ENCODE measurements at regions of chr15 and their contacts with region 1.

Region 1: GRCh38 chr15:78241007-78241406 is 6.6 kb upstream of the ACSBG1 start:
- DNase-seq: peak; percentile 90
- ATAC-seq: peak; percentile 95
- H3K4me3 Mint-ChIP-seq: no peak overlapping the region
- H3K27ac Mint-ChIP-seq: no peak overlapping the region
- H3K4me1 Mint-ChIP-seq: peaks cover 3% of the 10 kb centered on the region
- H3K27me3 Mint-ChIP-seq: peaks cover 16% of the 10 kb centered on the region

Region 2: GRCh38 chr15:78120523-78120922 is 120.5 kb before region 1 on chr15:
- CTCF ChIA-PET with region 1: interaction called, 101 read pairs
- DNase-seq: no peak
- ATAC-seq: no peak
- H3K4me3 Mint-ChIP-seq: no peak overlapping the region
- H3K27ac Mint-ChIP-seq: no peak overlapping the region
- H3K4me1 Mint-ChIP-seq: peaks cover 3% of the 10 kb centered on the region
- H3K27me3 Mint-ChIP-seq: peaks cover 4% of the 10 kb centered on the region

Region 3: GRCh38 chr15:78140292-78140691 is 100.7 kb before region 1 on chr15:
- CTCF ChIA-PET with region 1: interaction called, 13 read pairs
- DNase-seq: no peak
- ATAC-seq: no peak
- H3K4me3 Mint-ChIP-seq: no peak overlapping the region
- H3K27ac Mint-ChIP-seq: no peak overlapping the region
- H3K4me1 Mint-ChIP-seq: no peaks in the 10 kb centered on the region
- H3K27me3 Mint-ChIP-seq: no peaks in the 10 kb centered on the region

Region 4: DNA sequence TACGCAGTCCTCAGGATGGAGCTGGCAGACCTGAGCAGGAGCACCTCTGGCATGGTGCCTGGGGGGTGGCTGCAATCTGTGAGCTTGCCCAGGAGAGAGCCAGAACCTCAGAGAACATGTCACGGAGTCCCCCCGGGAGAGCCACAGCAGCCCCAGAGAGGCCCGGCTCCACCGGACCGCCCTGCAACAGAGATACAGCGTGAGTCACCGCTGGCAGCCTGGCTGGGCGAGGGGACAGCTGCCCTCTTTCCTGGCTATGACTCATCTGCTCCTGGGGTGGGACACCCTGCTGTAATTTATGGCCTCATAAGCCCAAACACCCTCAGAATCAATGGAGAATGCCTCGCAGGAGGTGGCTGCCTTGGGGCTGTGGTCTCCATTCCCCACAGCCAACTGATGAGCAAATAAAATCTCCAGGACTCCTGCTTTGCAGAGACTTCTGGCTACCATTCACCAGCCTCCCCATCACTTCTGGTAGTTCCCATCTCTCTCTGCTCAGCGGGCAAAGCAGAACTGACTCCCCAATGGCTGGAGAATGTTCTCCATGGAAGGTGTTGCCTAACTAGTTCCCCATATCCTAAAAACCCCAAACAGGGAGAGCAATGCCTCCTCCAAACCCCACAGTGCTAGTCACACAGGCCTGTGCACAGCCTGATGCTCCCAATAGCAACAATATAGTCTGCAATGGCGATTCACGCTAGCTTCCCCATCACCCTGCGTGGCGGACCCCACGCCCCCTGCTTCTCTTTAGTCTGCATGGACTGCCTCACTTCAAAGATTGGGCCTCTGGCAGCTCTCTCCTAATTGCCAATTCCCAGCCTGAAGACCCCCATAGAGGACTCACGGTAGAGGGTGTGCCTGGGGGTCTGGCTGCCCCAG is 28.2 kb before region 1 on chr15:
- CTCF ChIA-PET with region 1: interaction called, 12 read pairs
- DNase-seq: no peak
- ATAC-seq: no peak
- H3K4me3 Mint-ChIP-seq: no peak overlapping the region
- H3K27ac Mint-ChIP-seq: no peak overlapping the region
- H3K4me1 Mint-ChIP-seq: peaks cover 1% of the 10 kb centered on the region
- H3K27me3 Mint-ChIP-seq: peaks cover 23% of the 10 kb centered on the region

Region 5: GRCh38 chr15:78264304-78265136 is 23.5 kb after region 1 on chr15 and contains the start of gene DNAJA4:
- CTCF ChIA-PET with region 1: interaction called, 10 read pairs
- DNase-seq: peak; percentile 78
- ATAC-seq: peak; percentile 86
- H3K4me3 Mint-ChIP-seq: peak within 1 kb of the TSS; percentile 79
- H3K27ac Mint-ChIP-seq: peak within 1 kb of the TSS; percentile 81
- H3K4me1 Mint-ChIP-seq: peaks cover 20% of the 10 kb centered on the region
- H3K27me3 Mint-ChIP-seq: no peaks in the 10 kb centered on the region
- total RNA-seq, gene DNAJA4: 34.0 to 35.8 TPM

Region 6: GRCh38 chr15:78429477-78429876 is 188.5 kb after region 1 on chr15:
- CTCF ChIA-PET with region 1: no interaction called
- DNase-seq: no peak
- ATAC-seq: no peak
- H3K4me3 Mint-ChIP-seq: no peak overlapping the region
- H3K27ac Mint-ChIP-seq: no peak overlapping the region
- H3K4me1 Mint-ChIP-seq: peaks cover 20% of the 10 kb centered on the region
- H3K27me3 Mint-ChIP-seq: peaks cover 14% of the 10 kb centered on the region

Measured in activated CD8-positive, alpha-beta memory T cell treated with anti-CD3 and anti-CD28 coated beads, Interleukin-2, amount 10 ng/mL, durations not matched to agents 7 days and 5 days (primary cell).